Common myeloid progenitor, CD34-positive (primary cell): ENCODE measurements at regions of chr5 and their contacts with region 1.

Region 1: GRCh38 chr5:76771705-76772405 is 47.0 kb upstream of the F2RL1 start:
- DNase-seq: no peak
- H3K4me3 ChIP-seq: no peak overlapping the region
- H3K27ac ChIP-seq: no peak overlapping the region
- H3K4me1 ChIP-seq: peaks cover 0 to 4% (median 0%) of the 10 kb centered on the region in 4 experiments
- H3K27me3 ChIP-seq: no peaks in the 10 kb centered on the region

Region 2: DNA sequence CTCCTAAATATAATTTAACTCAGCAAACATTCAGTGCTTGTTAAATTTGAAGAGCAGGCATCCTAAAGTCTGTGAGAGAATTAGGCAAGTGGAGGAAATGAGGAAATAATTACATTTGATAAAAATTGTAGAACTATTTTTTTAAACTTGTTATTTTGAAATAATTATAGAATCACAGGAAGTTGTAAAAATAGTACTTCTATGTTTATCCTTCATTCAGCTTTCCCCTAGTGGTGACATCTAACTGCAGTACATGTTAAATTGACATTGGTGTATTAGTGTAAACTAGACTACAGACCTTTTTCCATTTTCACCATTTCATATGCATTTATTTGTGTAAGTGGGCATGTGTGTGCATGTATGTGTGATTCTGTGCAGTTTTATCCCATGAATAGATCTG is 200.3 kb before region 1 on chr5:
- CTCF ChIA-PET with region 1: no interaction called
- POLR2A ChIA-PET with region 1: no interaction called
- DNase-seq: peak in 2 of 3 donors; percentile 49 to 55
- H3K4me3 ChIP-seq: no peak overlapping the region
- H3K27ac ChIP-seq: no peak overlapping the region
- H3K4me1 ChIP-seq: peaks cover 0 to 10% (median 3%) of the 10 kb centered on the region in 4 experiments
- H3K27me3 ChIP-seq: no peaks in the 10 kb centered on the region

Region 3: GRCh38 chr5:76601470-76601869 is 170.4 kb before region 1 on chr5:
- CTCF ChIA-PET with region 1: interaction called, 39 read pairs
- POLR2A ChIA-PET with region 1: no interaction called
- DNase-seq: peak; percentile 68 to 81 (median 80)
- H3K4me3 ChIP-seq: no peak overlapping the region
- H3K27ac ChIP-seq: no peak overlapping the region
- H3K4me1 ChIP-seq: peaks cover 0 to 2% (median 0%) of the 10 kb centered on the region in 4 experiments
- H3K27me3 ChIP-seq: no peaks in the 10 kb centered on the region

Region 4: DNA sequence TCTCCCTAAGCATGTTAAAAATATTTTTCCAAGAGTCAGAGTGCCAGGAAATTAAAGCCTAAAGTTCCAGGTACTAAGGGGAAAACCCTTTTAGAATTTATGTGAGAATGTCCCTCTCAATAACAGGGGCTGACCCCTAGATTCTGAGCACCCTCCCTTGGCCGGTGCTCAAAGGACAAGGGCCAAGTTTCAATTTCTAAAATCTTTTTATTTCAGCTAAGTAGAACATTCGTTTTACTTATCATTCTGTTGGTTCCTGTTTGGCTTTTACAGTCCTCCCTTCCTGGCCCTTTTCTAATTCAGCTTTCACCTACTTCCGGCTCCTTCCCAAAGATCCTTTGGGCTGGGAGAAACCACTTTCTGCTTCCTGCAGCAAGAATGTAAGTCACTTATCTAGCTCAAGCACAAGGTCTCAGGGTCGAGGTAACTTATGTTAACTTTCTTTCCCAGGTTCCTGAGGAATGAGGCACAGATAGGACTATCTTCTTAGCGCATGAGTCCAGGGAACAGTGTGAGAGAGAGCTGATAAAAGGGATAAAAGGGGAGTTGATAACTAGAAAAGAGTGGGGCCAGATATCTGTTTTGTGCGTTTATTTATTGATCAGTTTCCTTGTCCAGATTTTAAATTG is 114.1 kb before region 1 on chr5:
- CTCF ChIA-PET with region 1: interaction called, 13 read pairs
- POLR2A ChIA-PET with region 1: no interaction called
- DNase-seq: peak; percentile 29 to 41 (median 31)
- H3K4me3 ChIP-seq: no peak overlapping the region
- H3K27ac ChIP-seq: peak overlapping the region in 1 of 2 experiments; percentile 35
- H3K4me1 ChIP-seq: no peaks in the 10 kb centered on the region
- H3K27me3 ChIP-seq: no peaks in the 10 kb centered on the region

Region 5: GRCh38 chr5:76715736-76716455 is 56.0 kb before region 1 on chr5 and contains the start of gene F2R:
- CTCF ChIA-PET with region 1: interaction called, 23 read pairs
- POLR2A ChIA-PET with region 1: interaction called, 3 read pairs
- DNase-seq: peak; percentile 73 to 85 (median 77)
- H3K4me3 ChIP-seq: peak within 1 kb of the TSS; percentile 80 to 100 (median 94)
- H3K27ac ChIP-seq: peak within 1 kb of the TSS; percentile 54 to 82
- H3K4me1 ChIP-seq: peaks cover 15 to 63% (median 38%) of the 10 kb centered on the region in 4 experiments
- H3K27me3 ChIP-seq: no peaks in the 10 kb centered on the region

Region 6: GRCh38 chr5:76720988-76721569 is 50.8 kb before region 1 on chr5:
- CTCF ChIA-PET with region 1: interaction called, 20 read pairs
- POLR2A ChIA-PET with region 1: interaction called, 3 read pairs
- DNase-seq: peak in 2 of 3 donors; percentile 46 to 51
- H3K4me3 ChIP-seq: peak overlapping the region in 4 of 7 experiments; percentile 6 to 40 (median 15)
- H3K27ac ChIP-seq: peak overlapping the region; percentile 25 to 76
- H3K4me1 ChIP-seq: peaks cover 13 to 65% (median 32%) of the 10 kb centered on the region in 4 experiments
- H3K27me3 ChIP-seq: no peaks in the 10 kb centered on the region

Region 7: DNA sequence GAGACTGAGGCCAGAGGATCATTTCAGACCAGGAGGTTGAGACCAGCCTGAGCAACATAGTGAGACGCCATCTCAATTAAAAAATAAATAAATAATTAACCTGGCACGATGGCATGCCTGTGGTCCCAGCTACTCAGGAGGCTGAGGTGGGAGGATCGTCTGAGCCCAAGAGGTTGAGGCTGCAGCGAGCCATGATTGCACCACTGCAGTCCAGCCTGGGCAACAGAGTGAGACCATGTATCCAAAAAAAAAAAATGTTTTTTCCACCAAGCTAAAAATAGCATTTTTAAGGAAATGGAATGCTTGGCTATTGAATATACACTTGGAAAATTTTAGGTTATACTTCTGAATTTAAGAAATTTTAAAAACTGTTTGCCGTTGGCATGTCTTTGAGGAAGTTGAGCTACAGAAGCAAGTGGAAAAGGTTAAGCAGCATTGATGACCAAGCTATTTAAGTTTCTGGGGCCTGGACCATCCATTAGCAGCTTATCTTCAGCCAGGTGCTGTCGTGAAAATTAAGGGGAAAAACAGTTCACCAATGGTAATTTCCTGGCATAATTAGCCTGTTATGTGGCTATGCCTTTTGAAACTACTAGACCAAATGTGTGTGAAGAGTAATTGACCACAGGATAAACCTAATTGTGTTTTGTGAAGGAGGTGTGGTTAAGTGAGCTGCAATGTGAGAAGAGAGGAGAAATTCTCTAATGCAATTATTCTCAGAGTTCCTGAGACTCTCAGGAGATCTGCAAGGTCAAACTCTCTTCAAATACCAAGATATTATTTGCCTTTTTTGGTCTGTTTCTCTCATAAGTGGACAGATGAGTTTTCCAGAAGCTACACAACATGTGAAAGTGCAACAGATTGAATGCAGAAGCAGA is 34.9 kb before region 1 on chr5:
- CTCF ChIA-PET with region 1: interaction called, 16 read pairs
- POLR2A ChIA-PET with region 1: no interaction called
- DNase-seq: peak in 2 of 3 donors; percentile 59 to 75
- H3K4me3 ChIP-seq: no peak overlapping the region
- H3K27ac ChIP-seq: peak overlapping the region in 1 of 2 experiments; percentile 56
- H3K4me1 ChIP-seq: peaks cover 17 to 35% (median 22%) of the 10 kb centered on the region in 4 experiments
- H3K27me3 ChIP-seq: no peaks in the 10 kb centered on the region

Region 8: DNA sequence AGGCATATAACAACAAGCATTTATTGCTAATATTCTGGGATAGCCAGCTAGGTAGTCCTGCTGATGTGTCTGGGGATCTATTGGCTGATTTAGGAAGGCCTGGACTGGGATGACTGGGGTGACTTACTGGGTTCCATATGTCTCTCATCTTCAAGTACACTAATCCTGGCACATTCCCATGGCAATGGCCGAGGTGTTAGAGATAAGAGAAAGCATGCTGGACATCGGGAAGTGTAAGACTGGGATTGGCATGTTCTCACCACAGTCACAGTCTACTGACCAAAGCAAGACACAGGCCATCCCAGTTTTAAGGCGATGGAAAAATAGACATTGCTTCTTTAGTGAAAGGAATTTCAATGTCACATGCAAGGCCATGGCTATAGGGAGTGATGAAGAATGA is 26.2 kb before region 1 on chr5:
- CTCF ChIA-PET with region 1: interaction called, 16 read pairs
- POLR2A ChIA-PET with region 1: no interaction called
- DNase-seq: no peak
- H3K4me3 ChIP-seq: no peak overlapping the region
- H3K27ac ChIP-seq: no peak overlapping the region
- H3K4me1 ChIP-seq: peaks cover 0 to 8% (median 0%) of the 10 kb centered on the region in 4 experiments
- H3K27me3 ChIP-seq: no peaks in the 10 kb centered on the region

Region 9: DNA sequence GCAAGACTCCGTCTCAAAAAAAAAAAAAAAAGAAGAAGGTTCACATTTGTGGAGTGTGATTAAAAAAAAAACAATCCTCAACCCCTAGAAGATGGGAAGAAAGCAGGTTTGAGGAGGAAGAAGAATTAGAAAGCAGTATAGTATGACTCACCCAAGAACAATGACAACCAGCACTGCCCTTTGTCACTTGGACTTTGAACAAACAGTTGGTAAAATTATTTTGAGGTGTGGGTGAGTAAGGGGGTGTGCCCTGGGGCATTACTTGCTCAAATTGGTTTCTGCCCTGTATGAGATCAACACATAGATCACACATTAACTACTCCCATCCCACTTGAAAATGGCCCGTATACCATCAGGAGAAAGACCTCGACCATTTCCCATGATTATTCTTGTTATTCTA is 13.6 kb after region 1 on chr5:
- CTCF ChIA-PET with region 1: no interaction called
- POLR2A ChIA-PET with region 1: no interaction called
- DNase-seq: no peak
- H3K4me3 ChIP-seq: no peak overlapping the region
- H3K27ac ChIP-seq: no peak overlapping the region
- H3K4me1 ChIP-seq: no peaks in the 10 kb centered on the region
- H3K27me3 ChIP-seq: no peaks in the 10 kb centered on the region